Activated naive CD4-positive, alpha-beta T cell treated with anti-CD3 and anti-CD28 coated beads, Interleukin-2, amount 10 ng/mL, durations not matched to agents 7 days and 5 days (primary cell): ENCODE measurements at regions of chrX and their contacts with region 1.

Region 1: DNA sequence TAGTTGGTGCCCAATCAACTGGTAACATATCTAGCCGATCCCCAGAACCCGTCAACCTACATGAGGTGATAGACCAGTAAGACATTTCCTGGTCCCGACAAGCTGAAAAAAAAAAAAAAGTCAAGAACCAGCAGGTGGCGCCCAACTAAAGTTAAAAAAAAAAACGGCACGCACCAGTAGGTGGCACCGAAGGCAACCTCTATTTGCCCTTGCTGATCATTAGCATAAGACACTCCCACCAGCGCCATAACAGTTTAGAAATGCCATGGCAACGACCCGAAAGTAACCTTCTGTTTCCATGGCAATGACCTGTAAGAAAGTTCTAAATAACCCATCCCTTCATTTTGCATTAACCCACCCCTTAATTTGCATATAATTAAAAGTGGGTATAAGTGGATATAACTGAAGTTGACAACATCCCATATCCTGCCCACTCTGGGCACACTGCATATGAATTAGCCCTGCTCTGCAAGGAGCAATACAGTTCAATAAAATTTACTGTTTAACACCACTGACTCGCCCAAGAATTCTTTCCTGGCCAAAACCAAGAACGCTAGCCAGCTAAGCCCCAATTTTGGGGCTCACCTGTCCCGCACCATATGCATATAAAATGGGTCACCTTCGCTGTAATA is 83.9 kb upstream of the SPANXB1 start:
- DNase-seq: peak; percentile 45
- H3K4me3 Mint-ChIP-seq: no peak overlapping the region
- H3K27ac Mint-ChIP-seq: no peak overlapping the region
- H3K4me1 Mint-ChIP-seq: peaks cover 20% of the 10 kb centered on the region
- H3K27me3 Mint-ChIP-seq: no peaks in the 10 kb centered on the region

Region 2: DNA sequence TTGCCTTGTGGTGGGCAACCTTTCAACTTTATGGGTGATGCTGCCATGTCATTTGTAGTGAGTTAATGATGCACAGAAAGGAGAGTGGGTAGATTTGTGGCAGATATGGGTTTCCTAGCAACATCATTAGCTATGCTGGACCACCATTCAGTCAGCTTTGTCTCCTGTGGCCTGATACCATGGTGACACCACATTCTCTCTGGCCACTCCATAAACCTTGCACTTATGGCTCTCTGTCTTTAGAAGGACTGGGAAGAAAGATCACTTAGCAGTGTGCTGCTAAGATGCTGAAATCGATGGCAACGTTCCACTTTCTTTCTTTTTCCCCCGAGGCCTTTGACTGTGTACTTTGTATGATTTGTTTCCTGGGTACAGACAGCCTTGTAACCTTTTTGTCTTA is 318.7 kb before region 1 on chrX:
- CTCF ChIA-PET with region 1: no interaction called
- DNase-seq: no peak
- H3K4me3 Mint-ChIP-seq: no peak overlapping the region
- H3K27ac Mint-ChIP-seq: no peak overlapping the region
- H3K4me1 Mint-ChIP-seq: no peaks in the 10 kb centered on the region
- H3K27me3 Mint-ChIP-seq: no peaks in the 10 kb centered on the region

Region 3: GRCh38 chrX:140775211-140775610 is 143.3 kb before region 1 on chrX:
- CTCF ChIA-PET with region 1: no interaction called
- DNase-seq: no peak
- H3K4me3 Mint-ChIP-seq: no peak overlapping the region
- H3K27ac Mint-ChIP-seq: no peak overlapping the region
- H3K4me1 Mint-ChIP-seq: no peaks in the 10 kb centered on the region
- H3K27me3 Mint-ChIP-seq: no peaks in the 10 kb centered on the region

Region 4: GRCh38 chrX:140933016-140933415 is 14.5 kb after region 1 on chrX:
- CTCF ChIA-PET with region 1: no interaction called
- DNase-seq: no peak
- H3K4me3 Mint-ChIP-seq: no peak overlapping the region
- H3K27ac Mint-ChIP-seq: no peak overlapping the region
- H3K4me1 Mint-ChIP-seq: no peaks in the 10 kb centered on the region
- H3K27me3 Mint-ChIP-seq: no peaks in the 10 kb centered on the region

Region 5: GRCh38 chrX:141278302-141278701 is 359.8 kb after region 1 on chrX:
- CTCF ChIA-PET with region 1: interaction called, 16 read pairs
- DNase-seq: no peak
- H3K4me3 Mint-ChIP-seq: no peak overlapping the region
- H3K27ac Mint-ChIP-seq: no peak overlapping the region
- H3K4me1 Mint-ChIP-seq: no peaks in the 10 kb centered on the region
- H3K27me3 Mint-ChIP-seq: no peaks in the 10 kb centered on the region